OCI-LY7 (cell line): ENCODE measurements at regions of chr21 and their contacts with region 1.

Region 1: GRCh38 chr21:33441489-33442477 is 38.0 kb downstream of the TMEM50B start:
- DNase-seq: peak; percentile 85
- H3K4me3 ChIP-seq: peak overlapping the region; percentile 5
- H3K27ac ChIP-seq: peak overlapping the region; percentile 69
- H3K4me1 ChIP-seq: peaks cover 61% of the 10 kb centered on the region
- CTCF ChIP-seq: no peak

Region 2: DNA sequence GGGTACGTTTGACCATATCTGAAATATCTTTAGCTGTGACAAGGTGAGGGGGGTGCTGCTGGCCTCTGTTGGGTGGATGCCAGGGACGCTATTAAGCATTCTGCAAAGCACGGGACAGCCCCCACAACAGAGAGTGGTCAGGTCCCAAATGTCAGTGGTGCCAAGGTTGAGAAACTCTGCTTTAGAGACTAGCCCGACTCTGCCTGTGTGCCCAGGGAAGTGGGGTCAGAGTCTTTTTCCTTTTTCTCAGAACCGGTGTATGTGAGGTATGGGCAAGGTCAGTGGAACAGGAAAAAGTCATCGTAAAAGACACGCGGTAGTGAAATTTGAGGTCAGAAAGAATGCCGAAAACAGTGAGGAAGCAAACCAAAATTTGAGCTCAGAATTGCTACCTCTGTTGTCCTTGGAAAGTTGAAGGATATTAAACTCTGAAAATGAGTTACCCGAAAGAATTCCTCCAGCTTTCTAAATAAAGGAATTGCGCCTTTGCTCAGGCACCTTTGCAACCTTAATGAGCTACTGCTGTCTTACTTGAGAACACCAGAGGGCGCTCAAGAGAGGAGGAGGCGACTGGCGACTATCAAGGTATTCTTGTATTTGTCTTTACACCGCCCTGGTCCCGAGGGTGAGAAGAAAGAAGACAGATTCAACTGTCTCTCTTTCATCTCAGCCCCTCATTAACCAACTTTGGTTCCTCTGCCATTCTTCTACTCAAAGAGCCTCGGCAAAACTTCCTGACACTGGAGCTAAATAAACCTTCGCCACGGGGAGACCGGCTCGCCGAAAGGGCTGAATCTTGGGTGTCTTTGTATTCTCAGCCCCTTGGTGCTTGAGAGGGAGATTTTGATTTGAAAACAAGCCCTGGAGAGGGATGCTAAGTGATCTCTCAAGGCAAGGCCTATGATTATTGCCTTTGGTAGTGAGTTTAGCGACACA is 501.4 kb before region 1 on chr21:
- CTCF ChIA-PET with region 1: no interaction called
- POLR2A ChIA-PET with region 1: no interaction called
- intact Hi-C with region 1: loop called (anchors 2 kb)
- DNase-seq: peak; percentile 60
- H3K4me3 ChIP-seq: no peak overlapping the region
- H3K27ac ChIP-seq: no peak overlapping the region
- H3K4me1 ChIP-seq: no peaks in the 10 kb centered on the region
- CTCF ChIP-seq: peak; percentile 89

Region 3: DNA sequence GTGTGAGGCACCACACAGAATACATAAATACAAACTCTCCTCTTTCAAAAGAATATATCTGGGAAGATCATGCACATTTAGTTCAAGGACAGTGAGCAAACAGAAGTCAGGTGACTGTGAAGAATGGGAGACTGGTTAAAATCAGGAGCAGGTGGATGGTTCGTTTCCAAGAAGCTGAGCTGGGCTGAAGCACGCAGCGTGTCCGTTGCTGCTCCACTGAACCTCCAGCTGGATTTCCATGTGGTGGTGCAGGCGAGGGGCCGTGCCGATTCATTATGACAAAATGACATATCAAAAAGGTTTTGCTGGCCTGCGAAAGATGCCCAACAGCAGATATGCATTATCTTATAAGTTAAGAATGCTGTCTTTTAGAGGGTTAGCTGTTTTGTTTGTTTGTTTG is 305.9 kb before region 1 on chr21:
- CTCF ChIA-PET with region 1: no interaction called
- POLR2A ChIA-PET with region 1: no interaction called
- intact Hi-C with region 1: loop called (anchors 2 kb)
- DNase-seq: no peak
- H3K4me3 ChIP-seq: no peak overlapping the region
- H3K27ac ChIP-seq: no peak overlapping the region
- H3K4me1 ChIP-seq: no peaks in the 10 kb centered on the region
- CTCF ChIP-seq: no peak

Region 4: GRCh38 chr21:33259995-33260394 is 181.8 kb before region 1 on chr21:
- CTCF ChIA-PET with region 1: no interaction called
- POLR2A ChIA-PET with region 1: no interaction called
- intact Hi-C with region 1: no loop called
- DNase-seq: no peak
- H3K4me3 ChIP-seq: no peak overlapping the region
- H3K27ac ChIP-seq: peak overlapping the region; percentile 17
- H3K4me1 ChIP-seq: peaks cover 38% of the 10 kb centered on the region
- CTCF ChIP-seq: no peak

Region 5: GRCh38 chr21:33374450-33375096 is 67.2 kb before region 1 on chr21:
- CTCF ChIA-PET with region 1: no interaction called
- POLR2A ChIA-PET with region 1: interaction called, 4 read pairs
- intact Hi-C with region 1: loop called (anchors 2 kb)
- DNase-seq: peak; percentile 87
- H3K4me3 ChIP-seq: peak overlapping the region; percentile 50
- H3K27ac ChIP-seq: peak overlapping the region; percentile 96
- H3K4me1 ChIP-seq: peaks cover 76% of the 10 kb centered on the region
- CTCF ChIP-seq: peak; percentile 95

Region 6: GRCh38 chr21:33608559-33608958 is 166.8 kb after region 1 on chr21:
- CTCF ChIA-PET with region 1: interaction called, 4 read pairs
- POLR2A ChIA-PET with region 1: no interaction called
- intact Hi-C with region 1: loop called (anchors 10 kb)
- DNase-seq: no peak
- H3K4me3 ChIP-seq: no peak overlapping the region
- H3K27ac ChIP-seq: no peak overlapping the region
- H3K4me1 ChIP-seq: no peaks in the 10 kb centered on the region
- CTCF ChIP-seq: no peak